ENCODE measurements at regions of chr1 and their contacts with region 1.

Region 1: DNA sequence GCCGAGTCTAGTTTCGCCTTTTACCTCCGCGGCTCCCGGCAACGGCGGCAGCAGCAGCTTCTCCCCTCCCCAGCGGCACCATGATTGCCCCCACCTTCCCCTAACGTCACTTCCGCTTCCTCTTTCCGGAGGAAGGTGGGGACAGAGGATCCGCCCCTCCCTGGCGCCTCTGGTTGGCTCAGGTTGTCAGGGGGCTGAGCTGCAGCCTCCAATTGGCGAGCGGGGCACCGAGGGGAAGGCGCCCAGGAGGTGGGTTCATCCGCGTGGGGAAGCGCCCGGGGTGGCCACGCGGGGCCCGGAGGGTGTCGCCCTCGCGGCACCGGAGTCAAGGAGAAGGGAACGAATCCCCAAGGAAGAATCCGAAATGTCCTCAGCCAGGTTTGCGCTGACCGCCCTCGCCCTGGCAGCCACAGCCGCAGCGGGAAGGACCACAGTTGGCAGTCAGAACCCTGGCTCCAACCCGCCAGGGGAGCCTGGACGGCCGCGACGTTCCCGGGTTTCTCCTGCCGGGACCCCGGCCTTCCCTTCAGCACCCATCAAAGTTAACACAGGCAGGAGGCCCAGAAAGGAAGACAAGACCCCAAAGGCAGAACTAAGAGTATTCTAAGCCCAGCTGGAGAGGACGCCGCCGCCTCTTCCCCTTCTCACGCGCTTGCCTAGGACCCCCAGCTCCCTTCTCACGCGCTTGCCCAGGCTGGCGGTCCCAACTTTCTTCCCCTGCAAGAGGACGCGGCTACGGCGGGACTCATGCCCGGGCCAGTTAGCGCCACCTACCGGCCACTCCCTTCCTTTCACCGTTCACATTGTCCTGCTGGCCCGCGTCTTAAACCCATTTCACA is at the start of gene MTF1:
- DNase-seq: peak; percentile 97
- H3K4me3 ChIP-seq: peak within 1 kb of the TSS; percentile 58 to 89 (median 87)
- H3K27ac ChIP-seq: peak within 1 kb of the TSS; percentile 78
- H3K4me1 ChIP-seq: peaks cover 11% of the 10 kb centered on the region
- H3K27me3 ChIP-seq: no peaks in the 10 kb centered on the region
- CTCF ChIP-seq: peak; percentile 93 to 96
- POLR2A ChIP-seq: peak; percentile 76
- total RNA-seq, gene MTF1: 18.5 and 18.9 TPM in 2 replicates

Region 2: DNA sequence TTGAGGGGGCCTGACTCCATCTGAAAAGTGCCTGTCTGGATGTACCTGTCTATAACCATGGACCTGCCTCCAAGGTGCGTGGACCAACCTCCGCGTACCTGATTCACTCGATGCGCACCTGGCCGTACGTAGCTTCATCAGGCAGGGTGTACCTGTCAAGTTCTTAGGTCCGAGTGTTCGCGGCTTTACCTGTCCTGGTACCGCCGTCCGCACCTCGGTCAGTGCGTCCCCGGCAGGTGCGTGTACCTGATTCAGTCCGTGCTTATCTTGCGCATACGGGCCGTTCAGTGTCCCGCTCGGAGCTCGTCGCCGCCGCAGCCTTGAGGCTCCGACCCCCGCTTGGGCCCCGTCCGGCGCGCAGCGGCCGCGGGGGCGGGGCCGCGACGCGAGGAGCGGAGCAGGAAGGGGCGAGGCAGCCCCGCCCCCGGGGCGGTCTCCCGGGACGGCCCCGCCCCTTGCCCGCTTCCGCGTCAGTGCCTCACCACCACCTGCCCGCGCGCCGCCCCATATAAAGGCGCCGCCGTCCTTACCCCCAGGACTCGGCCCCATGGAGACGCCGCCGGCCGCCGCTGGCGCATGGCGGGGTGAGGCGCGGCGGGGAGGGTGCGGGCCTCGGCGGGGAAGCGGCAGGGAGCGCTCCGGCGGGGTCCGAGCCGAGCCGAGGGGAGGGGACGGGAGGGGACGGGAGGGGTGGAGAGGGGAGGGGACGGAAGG is 385.5 kb before region 1 on chr1 and contains the start of gene ZC3H12A:
- CTCF ChIA-PET with region 1: no interaction called
- POLR2A ChIA-PET with region 1: no interaction called
- dilution Hi-C with region 1: no loop called
- intact Hi-C with region 1: loop called (anchors 10 kb)
- DNase-seq: peak; percentile 84
- H3K4me3 ChIP-seq: peak within 1 kb of the TSS; percentile 47 to 69 (median 55)
- H3K27ac ChIP-seq: peak within 1 kb of the TSS; percentile 65
- H3K4me1 ChIP-seq: peaks cover 72% of the 10 kb centered on the region
- H3K27me3 ChIP-seq: no peaks in the 10 kb centered on the region
- CTCF ChIP-seq: no peak
- POLR2A ChIP-seq: peak; percentile 97
- total RNA-seq, gene ZC3H12A: 6.3 and 7.5 TPM in 2 replicates

Region 3: DNA sequence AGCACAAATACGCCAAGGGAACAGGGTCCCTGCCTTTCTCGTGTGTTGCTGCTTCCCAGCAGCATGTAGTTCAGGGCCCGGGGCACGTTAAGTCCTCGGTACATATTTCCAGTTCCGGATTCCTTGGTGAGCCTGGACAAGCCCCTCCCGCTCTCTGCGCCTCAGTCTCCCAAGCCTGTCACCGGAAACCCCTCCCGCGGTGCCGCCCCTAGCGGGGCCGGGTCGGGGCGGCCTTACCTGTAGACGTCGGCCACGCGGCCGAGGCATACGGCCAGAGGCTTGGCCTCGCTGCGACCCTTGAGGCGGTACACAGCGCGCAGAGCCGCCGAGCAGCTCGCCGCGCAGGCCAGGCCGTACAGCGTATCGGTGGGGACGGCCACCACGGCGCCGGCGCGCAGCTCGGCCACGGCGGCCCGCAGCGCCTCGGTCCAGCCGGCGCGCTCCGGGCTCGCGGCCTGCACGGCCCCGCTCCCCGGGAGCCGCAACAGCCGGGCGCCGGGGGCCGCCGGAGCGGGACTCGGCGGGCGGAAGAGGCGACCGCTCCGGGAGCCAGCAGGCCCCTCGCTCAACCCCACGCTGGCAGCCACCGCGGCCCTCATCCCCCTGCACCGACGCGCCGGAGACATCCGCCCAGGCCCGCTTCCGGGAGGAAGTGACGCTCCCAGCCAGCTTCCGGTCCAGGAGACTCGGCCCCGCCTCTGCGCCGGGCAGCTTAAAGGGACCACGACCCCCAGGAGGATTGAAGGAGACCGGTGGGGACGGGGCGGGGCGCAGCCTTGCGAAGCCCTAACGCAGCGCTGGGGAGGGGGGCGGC is 52.0 kb before region 1 on chr1 and contains the starts of genes C1orf122 and YRDC:
- CTCF ChIA-PET with region 1: interaction called, 32 read pairs
- POLR2A ChIA-PET with region 1: interaction called, 10 read pairs
- dilution Hi-C with region 1: no loop called
- intact Hi-C with region 1: loop called (anchors 1 kb)
- DNase-seq: peak; percentile 93
- H3K4me3 ChIP-seq: peak within 1 kb of the TSS; percentile 66 to 93 (median 83)
- H3K27ac ChIP-seq: peak within 1 kb of the TSS; percentile 91
- H3K4me1 ChIP-seq: peaks cover 13% of the 10 kb centered on the region
- H3K27me3 ChIP-seq: no peaks in the 10 kb centered on the region
- CTCF ChIP-seq: no peak
- POLR2A ChIP-seq: no peak
- total RNA-seq, gene C1orf122: 32.8 and 36.5 TPM in 2 replicates
- total RNA-seq, gene YRDC: 19.2 and 20.4 TPM in 2 replicates

Region 4: GRCh38 chr1:37846647-37847339 is 12.9 kb before region 1 on chr1:
- CTCF ChIA-PET with region 1: interaction called, 21 read pairs
- POLR2A ChIA-PET with region 1: no interaction called
- dilution Hi-C with region 1: no loop called
- intact Hi-C with region 1: no loop called
- DNase-seq: no peak
- H3K4me3 ChIP-seq: no peak overlapping the region
- H3K27ac ChIP-seq: no peak overlapping the region
- H3K4me1 ChIP-seq: peaks cover 10% of the 10 kb centered on the region
- H3K27me3 ChIP-seq: no peaks in the 10 kb centered on the region
- CTCF ChIP-seq: no peak
- POLR2A ChIP-seq: no peak

Region 5: GRCh38 chr1:37931361-37932158 is 71.8 kb after region 1 on chr1:
- CTCF ChIA-PET with region 1: no interaction called
- POLR2A ChIA-PET with region 1: no interaction called
- dilution Hi-C with region 1: no loop called
- intact Hi-C with region 1: loop called (anchors 2 kb)
- DNase-seq: peak; percentile 98
- H3K4me3 ChIP-seq: peak overlapping the region; percentile 72 to 78 (median 74)
- H3K27ac ChIP-seq: peak overlapping the region; percentile 29
- H3K4me1 ChIP-seq: peaks cover 10% of the 10 kb centered on the region
- H3K27me3 ChIP-seq: no peaks in the 10 kb centered on the region
- CTCF ChIP-seq: no peak
- POLR2A ChIP-seq: no peak

Region 6: DNA sequence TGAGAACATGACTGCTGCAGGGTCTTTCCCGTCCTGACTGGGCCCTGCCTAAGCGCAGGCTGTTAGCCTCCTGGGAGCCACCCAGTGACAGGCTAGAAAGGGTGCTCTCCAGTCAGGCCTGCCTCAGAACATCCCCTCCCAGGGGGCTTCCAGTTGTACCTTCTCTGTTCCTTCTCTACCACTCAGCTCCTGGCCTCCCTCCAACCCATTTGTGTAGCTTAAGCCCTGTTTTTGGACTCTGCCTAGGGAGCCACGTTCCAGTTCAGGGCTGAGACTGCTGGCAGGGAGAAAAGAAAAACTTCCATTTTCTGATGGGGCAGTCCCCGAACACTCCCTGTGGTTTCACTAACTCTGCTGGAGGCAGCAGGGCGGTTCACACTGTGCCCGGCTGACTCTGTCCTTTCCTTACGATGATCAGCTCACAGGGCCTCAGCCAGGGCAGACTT is 202.2 kb after region 1 on chr1:
- CTCF ChIA-PET with region 1: no interaction called
- POLR2A ChIA-PET with region 1: no interaction called
- dilution Hi-C with region 1: no loop called
- intact Hi-C with region 1: no loop called
- DNase-seq: no peak
- H3K4me3 ChIP-seq: no peak overlapping the region
- H3K27ac ChIP-seq: no peak overlapping the region
- H3K4me1 ChIP-seq: no peaks in the 10 kb centered on the region
- H3K27me3 ChIP-seq: peaks cover 0 to under 1% of the 10 kb centered on the region in 2 experiments
- CTCF ChIP-seq: no peak
- POLR2A ChIP-seq: no peak

Measured in endothelial cell of umbilical vein (primary cell).